A549 (cell line): ENCODE measurements at regions of chr12 and their contacts with region 1.

Region 1: DNA sequence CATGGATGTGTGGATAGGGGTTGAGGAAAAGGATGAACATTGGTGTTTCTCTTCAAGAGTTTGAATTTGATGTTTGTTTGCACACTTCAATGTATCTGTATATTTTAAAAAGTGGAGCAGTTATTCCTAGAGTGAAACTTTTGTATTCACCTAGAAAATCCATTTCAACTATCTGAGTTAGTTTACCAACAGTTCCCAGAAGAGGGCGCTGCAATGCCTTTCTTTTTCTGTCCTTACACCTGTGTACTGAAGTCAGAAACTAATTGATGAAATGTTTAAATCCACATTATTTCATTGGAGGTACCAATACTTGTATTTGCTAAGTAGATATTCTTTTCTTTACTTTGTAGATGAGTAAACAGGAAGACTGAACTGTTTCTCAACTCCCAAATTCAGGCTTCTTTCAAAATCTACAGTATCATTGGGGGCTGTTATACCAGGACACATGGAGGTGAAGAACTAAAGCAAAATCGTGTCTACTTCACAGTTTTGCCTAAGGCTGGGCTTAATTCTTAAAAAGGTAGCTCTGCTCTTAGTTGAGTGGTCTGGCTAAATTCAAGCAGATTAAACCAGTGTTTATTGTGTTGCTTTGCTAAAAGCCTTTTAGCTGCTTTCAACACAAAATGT is 26.6 kb upstream of the KLRB1 start:
- DNase-seq: peak; percentile 32 to 49
- ATAC-seq: peak in 1 of 2 experiments; percentile 78; a peak in 3 of 6 replicates
- H3K4me3 ChIP-seq: no peak overlapping the region
- H3K27ac ChIP-seq: no peak overlapping the region
- H3K4me1 ChIP-seq: no peaks in the 10 kb centered on the region
- CTCF ChIP-seq: peak; percentile 80
- EP300 ChIP-seq: no peak
- POLR2A ChIP-seq: no peak
- RAD21 ChIP-seq: peak; percentile 75

Region 2: GRCh38 chr12:9647825-9648700 is 13.8 kb after region 1 on chr12:
- CTCF ChIA-PET with region 1: interaction called, 10 read pairs
- POLR2A ChIA-PET with region 1: no interaction called
- DNase-seq: peak; percentile 74 to 83
- ATAC-seq: peak; percentile 92 to 97
- H3K4me3 ChIP-seq: peak overlapping the region; percentile 74
- H3K27ac ChIP-seq: peak overlapping the region; percentile 77 to 86
- H3K4me1 ChIP-seq: peaks cover 13% of the 10 kb centered on the region; the same call in 2 of the 3 replicates
- CTCF ChIP-seq: no peak
- EP300 ChIP-seq: no peak
- POLR2A ChIP-seq: peak; percentile 39; the same call in 1 of the 2 replicates
- RAD21 ChIP-seq: no peak

Region 3: DNA sequence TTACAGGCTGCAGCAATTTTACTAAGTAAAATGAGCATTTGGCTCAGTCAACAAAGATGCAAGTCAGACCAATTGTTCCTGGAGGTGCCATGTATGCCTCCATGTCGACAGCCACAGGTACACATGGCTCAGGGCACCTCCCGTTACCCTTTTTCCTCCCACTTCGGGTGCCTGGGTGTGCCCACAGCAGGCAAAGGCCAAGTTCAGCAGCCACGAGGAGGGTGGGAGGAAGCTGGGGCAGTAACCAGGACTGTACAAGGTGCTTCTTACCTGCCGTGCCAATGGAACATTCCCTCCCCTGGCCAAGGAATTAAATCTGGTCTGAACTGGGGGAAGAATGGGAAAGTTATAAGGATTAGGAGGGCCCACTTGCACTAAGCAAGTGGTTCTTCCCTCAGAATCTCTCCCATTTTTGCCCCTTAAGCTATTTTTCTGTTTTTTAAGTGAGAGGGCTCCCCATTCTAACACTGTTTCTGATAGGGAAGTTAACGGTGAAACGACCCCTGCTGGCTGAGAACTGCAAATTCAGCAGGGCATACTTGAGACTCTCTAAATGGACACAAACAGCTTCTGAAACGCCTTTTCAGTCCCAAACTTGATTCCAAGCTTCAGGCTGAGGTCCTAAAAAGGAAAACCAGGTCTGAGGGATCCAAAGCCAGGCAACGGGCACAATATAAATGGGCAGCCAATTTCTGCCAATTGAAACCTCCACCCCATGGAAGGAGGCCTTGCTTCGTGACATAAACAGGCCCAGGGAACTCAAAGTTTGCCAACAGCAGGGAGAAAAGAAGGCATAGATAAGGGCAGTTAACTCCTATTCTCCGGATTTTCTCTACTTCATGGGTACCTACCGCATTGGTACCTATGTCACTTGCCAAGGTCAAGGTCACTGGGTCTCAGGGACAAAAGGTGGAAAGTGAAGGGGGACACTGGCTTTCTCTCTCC is 73.8 kb after region 1 on chr12:
- CTCF ChIA-PET with region 1: interaction called, 67 read pairs
- POLR2A ChIA-PET with region 1: no interaction called
- DNase-seq: peak; percentile 33 to 68
- ATAC-seq: peak; percentile 85 to 97
- H3K4me3 ChIP-seq: no peak overlapping the region
- H3K27ac ChIP-seq: no peak overlapping the region
- H3K4me1 ChIP-seq: no peaks in the 10 kb centered on the region
- CTCF ChIP-seq: peak; percentile 82
- EP300 ChIP-seq: no peak
- POLR2A ChIP-seq: no peak
- RAD21 ChIP-seq: peak; percentile 62 to 67